ENCODE measurements at regions of chr19 and their contacts with region 1.

Region 1: GRCh38 chr19:18251587-18252369 is 22.5 kb downstream of the IQCN start:
- DNase-seq: peak; percentile 20
- H3K4me3 ChIP-seq: no peak overlapping the region
- H3K27ac ChIP-seq: no peak overlapping the region
- H3K27me3 ChIP-seq: peaks cover 21% of the 10 kb centered on the region
- CTCF ChIP-seq: peak; percentile 92

Region 2: DNA sequence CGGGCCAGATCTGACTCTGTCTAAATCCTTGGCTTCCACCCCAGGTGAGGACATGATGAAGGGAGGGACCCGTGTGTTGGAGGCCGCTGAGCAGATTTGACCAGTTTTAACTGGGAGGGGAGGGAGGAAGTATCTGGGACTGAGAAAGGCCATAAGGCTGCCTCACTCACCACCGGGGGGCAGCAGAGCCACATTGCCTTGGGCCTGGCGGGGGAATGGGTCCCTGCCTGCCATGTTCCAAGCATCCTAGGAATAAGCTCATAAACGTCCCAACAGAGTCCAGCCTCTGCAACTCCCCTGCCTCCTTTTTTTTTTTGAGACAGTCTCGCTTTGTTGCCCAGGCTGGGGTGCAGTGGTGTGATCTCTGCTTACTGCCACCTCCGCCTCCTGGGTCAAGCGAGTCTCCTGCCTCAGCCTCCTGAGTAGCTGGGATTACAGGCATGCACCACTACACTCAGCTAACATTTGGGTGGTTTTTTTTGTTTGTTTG is 138.7 kb before region 1 on chr19:
- CTCF ChIA-PET with region 1: interaction called, 28 read pairs
- POLR2A ChIA-PET with region 1: no interaction called
- DNase-seq: no peak
- H3K4me3 ChIP-seq: no peak overlapping the region
- H3K27ac ChIP-seq: no peak overlapping the region
- H3K27me3 ChIP-seq: peaks cover 3% of the 10 kb centered on the region
- CTCF ChIP-seq: peak; percentile 96

Region 3: GRCh38 chr19:18128044-18128443 is 123.7 kb before region 1 on chr19:
- CTCF ChIA-PET with region 1: no interaction called
- POLR2A ChIA-PET with region 1: no interaction called
- DNase-seq: no peak
- H3K4me3 ChIP-seq: no peak overlapping the region
- H3K27ac ChIP-seq: no peak overlapping the region
- H3K27me3 ChIP-seq: no peaks in the 10 kb centered on the region
- CTCF ChIP-seq: no peak

Region 4: GRCh38 chr19:18160971-18161635 is 90.7 kb before region 1 on chr19:
- CTCF ChIA-PET with region 1: interaction called, 15 read pairs
- POLR2A ChIA-PET with region 1: no interaction called
- DNase-seq: no peak
- H3K4me3 ChIP-seq: peak overlapping the region; percentile 2; the same call in 1 of the 2 replicates
- H3K27ac ChIP-seq: no peak overlapping the region
- H3K27me3 ChIP-seq: no peaks in the 10 kb centered on the region
- CTCF ChIP-seq: no peak

Region 5: GRCh38 chr19:18192673-18193387 is 58.9 kb before region 1 on chr19 and contains the start of gene MPV17L2:
- CTCF ChIA-PET with region 1: interaction called, 99 read pairs
- POLR2A ChIA-PET with region 1: interaction called, 3 read pairs
- DNase-seq: peak; percentile 100
- H3K4me3 ChIP-seq: peak within 1 kb of the TSS; percentile 84
- H3K27ac ChIP-seq: peak within 1 kb of the TSS; percentile 90
- H3K27me3 ChIP-seq: no peaks in the 10 kb centered on the region
- CTCF ChIP-seq: no peak
- polyA plus RNA-seq, gene MPV17L2: 8.2 and 13.4 TPM in 2 replicates

Region 6: DNA sequence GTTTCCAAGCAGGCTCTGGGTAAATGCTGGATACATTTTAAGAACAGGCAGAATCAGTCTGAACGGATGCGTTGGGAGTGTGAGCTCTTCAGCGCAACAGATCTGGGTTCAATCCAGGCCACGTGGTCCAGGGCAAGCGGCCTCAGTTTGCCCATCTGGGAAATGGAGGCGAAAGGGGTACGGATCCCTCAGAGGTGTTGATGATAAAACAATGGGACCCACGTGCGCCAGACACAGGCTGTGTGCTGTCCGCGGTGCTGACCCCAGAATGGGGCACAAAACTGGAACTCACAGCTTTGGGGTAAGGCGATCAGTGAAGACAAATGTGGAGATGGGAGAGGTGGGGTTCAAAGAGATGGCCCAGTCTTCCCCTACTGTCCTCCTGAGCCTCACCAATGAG is 12.5 kb before region 1 on chr19:
- CTCF ChIA-PET with region 1: interaction called, 13 read pairs
- POLR2A ChIA-PET with region 1: no interaction called
- DNase-seq: no peak
- H3K4me3 ChIP-seq: no peak overlapping the region
- H3K27ac ChIP-seq: no peak overlapping the region
- H3K27me3 ChIP-seq: peaks cover 5% of the 10 kb centered on the region
- CTCF ChIP-seq: no peak